ENCODE measurements at regions of chr1 and their contacts with region 1.

Region 1: DNA sequence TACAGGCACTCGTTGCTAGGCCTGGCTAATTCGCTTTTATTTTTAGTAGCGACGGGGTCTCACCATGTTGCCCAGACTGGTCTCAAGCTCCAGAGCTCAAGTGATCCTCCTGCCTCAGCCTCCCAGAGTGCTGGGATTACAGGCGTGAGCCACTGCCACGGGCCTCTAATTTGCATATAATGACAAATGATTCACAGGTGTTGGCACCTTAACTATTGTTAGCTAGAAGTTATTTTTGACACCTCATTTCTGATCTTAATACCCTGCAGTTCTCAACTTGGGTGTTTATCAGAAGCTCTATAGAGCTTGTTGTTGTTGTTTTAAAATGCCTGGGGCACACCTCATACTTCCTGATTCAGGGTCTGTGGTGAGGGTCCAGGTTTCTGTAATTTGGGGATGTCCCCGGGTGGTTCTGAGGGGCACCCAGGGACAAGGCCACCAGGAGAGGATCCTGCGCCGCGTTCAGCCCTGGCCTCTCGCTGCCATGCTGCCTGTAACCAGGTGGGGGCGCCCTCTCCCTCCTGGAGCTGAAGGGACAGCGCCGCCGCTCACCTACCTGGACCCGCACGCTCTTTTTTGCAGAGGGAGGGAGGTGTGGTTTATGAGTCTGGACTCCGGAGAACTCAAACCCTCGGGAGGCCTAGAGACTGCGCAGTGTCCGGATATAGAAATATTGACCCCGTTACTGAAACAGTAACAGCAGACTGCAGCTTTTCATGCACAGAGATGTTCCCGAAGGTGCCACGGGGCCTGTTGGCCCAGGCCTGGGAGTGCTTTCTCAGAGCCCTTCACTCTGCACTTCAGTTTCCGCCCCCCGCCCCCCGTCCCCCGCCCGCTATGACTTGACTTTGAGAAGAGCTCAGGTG is 23.0 kb upstream of the NEK2 start:
- DNase-seq: peak; percentile 90
- ATAC-seq: peak; percentile 95
- H3K4me3 Mint-ChIP-seq: peak overlapping the region; percentile 32
- H3K27ac Mint-ChIP-seq: peak overlapping the region; percentile 31
- H3K4me1 Mint-ChIP-seq: peaks cover 50% of the 10 kb centered on the region
- H3K27me3 Mint-ChIP-seq: peaks cover 3% of the 10 kb centered on the region

Region 2: DNA sequence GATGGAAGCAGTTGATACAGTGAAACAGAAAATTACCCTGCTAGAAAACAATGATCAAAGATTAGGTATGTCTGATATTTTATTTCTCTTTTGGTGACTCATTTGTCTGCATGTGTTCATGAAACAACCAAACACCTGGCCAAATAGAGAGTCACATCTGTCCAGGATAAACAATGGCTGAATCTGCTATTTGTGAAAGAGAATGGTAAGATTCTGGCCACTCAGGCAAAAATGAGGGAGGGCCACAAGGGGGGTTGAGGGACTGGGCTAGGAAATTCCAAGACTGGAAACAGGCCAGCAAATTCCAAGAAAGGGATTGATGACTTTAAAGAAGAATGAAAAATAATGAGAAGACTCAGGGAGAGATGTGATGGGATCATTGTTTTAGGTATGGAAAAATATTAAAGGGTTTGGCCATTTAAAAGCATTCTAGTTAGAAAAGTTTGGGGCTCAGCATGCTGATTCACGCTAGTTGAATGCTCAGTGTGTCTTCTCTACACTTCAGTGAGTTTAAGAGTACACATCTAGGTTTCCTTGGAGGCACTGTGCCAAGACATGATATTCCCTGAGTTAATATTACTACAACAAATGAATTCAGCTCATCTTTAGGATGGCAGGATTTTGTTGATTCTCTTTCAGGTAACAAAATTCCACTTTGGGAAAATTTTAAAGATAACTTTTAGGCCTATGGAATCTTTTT is 326.8 kb before region 1 on chr1:
- CTCF ChIA-PET with region 1: no interaction called
- POLR2A ChIA-PET with region 1: no interaction called
- DNase-seq: no peak
- ATAC-seq: no peak
- H3K4me3 Mint-ChIP-seq: no peak overlapping the region
- H3K27ac Mint-ChIP-seq: no peak overlapping the region
- H3K4me1 Mint-ChIP-seq: peaks cover 20% of the 10 kb centered on the region
- H3K27me3 Mint-ChIP-seq: no peaks in the 10 kb centered on the region

Region 3: GRCh38 chr1:211726467-211726995 is 28.1 kb after region 1 on chr1:
- CTCF ChIA-PET with region 1: interaction called, 12 read pairs
- POLR2A ChIA-PET with region 1: no interaction called
- DNase-seq: no peak
- ATAC-seq: no peak
- H3K4me3 Mint-ChIP-seq: no peak overlapping the region
- H3K27ac Mint-ChIP-seq: no peak overlapping the region
- H3K4me1 Mint-ChIP-seq: no peaks in the 10 kb centered on the region
- H3K27me3 Mint-ChIP-seq: peaks cover 8% of the 10 kb centered on the region

Region 4: GRCh38 chr1:211762206-211762605 is 63.8 kb after region 1 on chr1:
- CTCF ChIA-PET with region 1: interaction called, 10 read pairs
- POLR2A ChIA-PET with region 1: no interaction called
- DNase-seq: no peak
- ATAC-seq: no peak
- H3K4me3 Mint-ChIP-seq: no peak overlapping the region
- H3K27ac Mint-ChIP-seq: no peak overlapping the region
- H3K4me1 Mint-ChIP-seq: no peaks in the 10 kb centered on the region
- H3K27me3 Mint-ChIP-seq: no peaks in the 10 kb centered on the region

Region 5: DNA sequence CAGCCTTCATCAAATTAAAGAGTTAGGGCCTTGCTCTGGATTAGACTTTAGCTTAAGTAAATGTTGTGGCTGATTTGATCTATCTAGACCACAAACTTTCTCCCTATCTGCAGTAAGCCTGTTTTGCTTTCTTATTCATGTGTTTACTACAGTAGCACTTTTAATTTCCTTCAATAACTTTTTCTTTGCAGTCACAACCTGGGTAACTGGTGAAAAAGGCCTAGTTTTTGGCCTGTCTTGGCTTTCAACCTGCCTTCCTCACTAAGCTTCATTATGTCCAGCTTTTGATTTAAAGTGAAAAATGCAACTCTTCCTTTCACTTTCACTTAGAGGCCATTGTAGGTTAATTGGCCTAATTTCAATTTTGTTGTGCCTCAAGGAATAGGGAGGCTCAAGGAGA is 144.6 kb after region 1 on chr1:
- CTCF ChIA-PET with region 1: interaction called, 10 read pairs
- POLR2A ChIA-PET with region 1: no interaction called
- DNase-seq: no peak
- ATAC-seq: peak; percentile 63
- H3K4me3 Mint-ChIP-seq: peak overlapping the region; percentile 26
- H3K27ac Mint-ChIP-seq: peak overlapping the region; percentile 82
- H3K4me1 Mint-ChIP-seq: peaks cover 34% of the 10 kb centered on the region
- H3K27me3 Mint-ChIP-seq: no peaks in the 10 kb centered on the region

Region 6: GRCh38 chr1:212012034-212012740 is 313.8 kb after region 1 on chr1:
- CTCF ChIA-PET with region 1: interaction called, 10 read pairs
- POLR2A ChIA-PET with region 1: no interaction called
- DNase-seq: peak; percentile 77
- ATAC-seq: peak; percentile 99
- H3K4me3 Mint-ChIP-seq: no peak overlapping the region
- H3K27ac Mint-ChIP-seq: no peak overlapping the region
- H3K4me1 Mint-ChIP-seq: no peaks in the 10 kb centered on the region
- H3K27me3 Mint-ChIP-seq: no peaks in the 10 kb centered on the region

Measured in activated CD8-positive, alpha-beta T cell treated with anti-CD3 and anti-CD28 coated beads, Interleukin-2, amount 10 ng/mL, durations not matched to agents 7 days and 5 days (primary cell).